Heart left ventricle (tissue), 16 donors: ENCODE measurements at regions of chr18 and their contacts with region 1.

Region 1: DNA sequence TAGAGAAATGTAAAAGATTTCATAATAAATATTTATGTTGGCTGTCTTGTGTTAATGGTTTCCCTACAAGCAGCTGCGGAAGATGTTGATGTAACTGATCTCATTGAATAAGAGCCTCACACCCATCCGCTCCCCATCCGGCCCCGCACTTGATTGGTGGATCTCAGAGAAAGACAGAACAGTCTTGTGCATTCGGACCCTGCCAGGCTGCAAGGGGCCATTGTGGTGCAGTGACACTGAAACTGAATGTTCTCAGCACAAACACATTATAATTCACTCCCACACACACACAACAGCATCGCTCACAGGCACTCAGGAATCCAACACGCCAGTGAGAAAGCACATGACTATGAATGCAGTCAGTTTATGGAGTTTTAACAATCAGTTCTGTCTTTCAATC is 47.8 kb downstream of the PRELID3A start:
- DNase-seq: no peak
- ATAC-seq: peak in 1 of 4 donors; percentile 7
- H3K4me3 ChIP-seq: no peak overlapping the region
- H3K27ac ChIP-seq: no peak overlapping the region
- H3K4me1 ChIP-seq: peaks cover 0 to under 1% (median 0%) of the 10 kb centered on the region in 12 donors
- H3K27me3 ChIP-seq: no peaks in the 10 kb centered on the region
- CTCF ChIP-seq: no peak
- POLR2A ChIP-seq: no peak

Region 2: GRCh38 chr18:12397254-12397653 is 58.2 kb before region 1 on chr18:
- intact Hi-C with region 1: loop called in 2 of 10 experiments (anchors 5 to 10 kb)
- DNase-seq: no peak
- ATAC-seq: no peak
- H3K4me3 ChIP-seq: no peak overlapping the region
- H3K27ac ChIP-seq: no peak overlapping the region
- H3K4me1 ChIP-seq: peaks cover 0 to 6% (median 0%) of the 10 kb centered on the region in 12 donors
- H3K27me3 ChIP-seq: peaks cover 0 to 12% (median 0%) of the 10 kb centered on the region in 9 donors
- CTCF ChIP-seq: no peak
- POLR2A ChIP-seq: no peak

Region 3: DNA sequence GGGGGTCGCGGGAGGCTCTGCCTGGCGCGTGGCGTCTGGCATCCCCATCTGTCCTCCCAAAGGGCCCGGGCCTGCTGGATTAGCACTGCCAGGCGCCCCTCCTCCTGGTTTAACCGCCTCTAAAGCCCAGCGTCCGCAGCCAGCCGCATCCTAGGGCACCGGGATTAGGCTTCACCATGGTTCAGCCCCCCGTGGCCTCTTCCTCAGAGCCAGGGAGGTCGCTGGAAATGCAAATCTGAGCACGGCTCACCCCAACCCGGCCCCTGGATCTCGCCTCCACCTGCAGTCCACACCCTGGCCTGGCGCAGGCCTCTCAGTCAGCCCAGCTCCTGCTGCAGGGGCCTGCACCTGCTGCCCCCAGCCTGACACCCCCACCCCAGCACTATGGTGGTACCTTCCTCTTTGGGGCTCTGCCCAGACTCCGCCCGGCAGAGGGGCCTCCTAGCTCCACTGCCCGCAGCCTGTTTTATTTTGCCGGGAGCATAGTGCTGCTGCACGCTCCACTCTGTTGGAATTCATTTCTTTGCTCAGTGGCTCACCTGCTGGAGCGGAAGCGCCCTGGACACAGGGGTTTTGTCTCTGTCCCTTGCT is 34.6 kb before region 1 on chr18:
- intact Hi-C with region 1: no loop called
- DNase-seq: no peak
- ATAC-seq: peak; percentile 22 to 34 (median 32)
- H3K4me3 ChIP-seq: peak overlapping the region in 10 of 12 donors; percentile 2 to 69 (median 58)
- H3K27ac ChIP-seq: no peak overlapping the region
- H3K4me1 ChIP-seq: peaks cover 0 to 20% (median 5%) of the 10 kb centered on the region in 12 donors
- H3K27me3 ChIP-seq: no peaks in the 10 kb centered on the region
- CTCF ChIP-seq: no peak
- POLR2A ChIP-seq: no peak

Region 4: GRCh38 chr18:12543697-12544096 is 88.2 kb after region 1 on chr18:
- intact Hi-C with region 1: no loop called
- DNase-seq: no peak
- ATAC-seq: no peak
- H3K4me3 ChIP-seq: no peak overlapping the region
- H3K27ac ChIP-seq: no peak overlapping the region
- H3K4me1 ChIP-seq: no peaks in the 10 kb centered on the region
- H3K27me3 ChIP-seq: no peaks in the 10 kb centered on the region
- CTCF ChIP-seq: no peak
- POLR2A ChIP-seq: no peak